Naive thymus-derived CD4-positive, alpha-beta T cell (primary cell): ENCODE measurements at regions of chr5 and their contacts with region 1.

Region 1: GRCh38 chr5:139341650-139342422 is at the start of gene PAIP2:
- DNase-seq: peak; percentile 94 to 98 (median 97)
- ATAC-seq: peak; percentile 95
- H3K4me3 ChIP-seq: peak within 1 kb of the TSS; percentile 96
- H3K4me3 Mint-ChIP-seq: peak within 1 kb of the TSS; percentile 95 to 100 (median 98)
- H3K27ac ChIP-seq: peak within 1 kb of the TSS; percentile 98
- H3K27ac Mint-ChIP-seq: peak within 1 kb of the TSS; percentile 96 to 100 (median 99)
- H3K4me1 ChIP-seq: peaks cover 28 to 30% of the 10 kb centered on the region in 2 donors
- H3K4me1 Mint-ChIP-seq: peaks cover 34 to 65% (median 55%) of the 10 kb centered on the region in 7 donors
- H3K27me3 ChIP-seq: no peaks in the 10 kb centered on the region
- H3K27me3 Mint-ChIP-seq: peaks cover 0 to 5% (median 0%) of the 10 kb centered on the region in 5 donors
- total RNA-seq, gene PAIP2: 88.8 to 121 (median 106) TPM

Region 2: GRCh38 chr5:138824924-138825863 is 516.6 kb before region 1 on chr5:
- CTCF ChIA-PET with region 1: no interaction called
- POLR2A ChIA-PET with region 1: no interaction called
- intact Hi-C with region 1: loop called in 1 of 2 experiments (anchors 1 kb)
- DNase-seq: peak in 4 of 9 donors; percentile 5 to 25 (median 18)
- ATAC-seq: no peak
- H3K4me3 ChIP-seq: no peak overlapping the region
- H3K4me3 Mint-ChIP-seq: no peak overlapping the region
- H3K27ac ChIP-seq: no peak overlapping the region
- H3K27ac Mint-ChIP-seq: no peak overlapping the region
- H3K4me1 ChIP-seq: no peaks in the 10 kb centered on the region
- H3K4me1 Mint-ChIP-seq: peaks cover 0 to 4% (median 0%) of the 10 kb centered on the region in 7 donors
- H3K27me3 ChIP-seq: no peaks in the 10 kb centered on the region
- H3K27me3 Mint-ChIP-seq: peaks cover 6 to 31% (median 18%) of the 10 kb centered on the region in 5 donors

Region 3: GRCh38 chr5:139210585-139210984 is 131.3 kb before region 1 on chr5:
- CTCF ChIA-PET with region 1: no interaction called
- POLR2A ChIA-PET with region 1: no interaction called
- intact Hi-C with region 1: no loop called
- DNase-seq: no peak
- ATAC-seq: no peak
- H3K4me3 ChIP-seq: no peak overlapping the region
- H3K4me3 Mint-ChIP-seq: no peak overlapping the region
- H3K27ac ChIP-seq: no peak overlapping the region
- H3K27ac Mint-ChIP-seq: no peak overlapping the region
- H3K4me1 ChIP-seq: no peaks in the 10 kb centered on the region
- H3K4me1 Mint-ChIP-seq: peaks cover 0 to 11% (median 0%) of the 10 kb centered on the region in 7 donors
- H3K27me3 ChIP-seq: no peaks in the 10 kb centered on the region
- H3K27me3 Mint-ChIP-seq: no peaks in the 10 kb centered on the region

Region 4: DNA sequence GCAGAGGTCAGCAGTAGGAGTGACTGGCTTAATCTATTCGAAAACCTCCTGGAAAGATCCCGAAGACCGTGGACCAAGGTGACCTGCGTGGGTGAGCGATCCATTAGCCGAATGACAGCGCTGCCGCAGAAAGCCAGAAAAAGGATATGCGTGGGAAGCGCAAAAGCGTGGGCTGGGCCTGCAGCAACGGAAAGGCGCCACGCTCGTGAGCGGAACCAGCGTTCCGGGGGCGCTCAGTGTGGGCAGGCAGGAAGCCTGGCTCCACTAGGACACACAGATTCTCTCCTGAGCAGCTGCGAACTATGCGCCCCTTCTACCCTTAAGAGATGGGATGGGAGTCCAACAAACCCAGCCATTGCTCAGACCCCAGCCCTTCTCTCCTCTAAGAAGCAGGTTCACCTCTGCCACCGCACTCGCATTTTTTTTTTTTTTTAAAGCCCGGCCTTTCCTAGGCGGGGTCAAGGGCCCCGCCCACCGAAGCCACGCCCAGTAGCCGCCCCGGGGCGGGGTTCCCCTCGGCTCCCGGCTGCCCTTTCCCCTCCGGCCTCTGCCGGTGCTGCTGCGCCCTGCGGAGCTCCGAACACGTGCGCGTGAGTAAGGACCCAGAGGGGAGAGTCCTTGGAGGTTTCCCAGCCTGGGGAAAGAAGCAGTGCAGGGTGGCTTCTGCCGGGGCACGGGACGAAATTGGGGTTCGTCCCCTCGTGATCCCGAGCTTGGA is 68.1 kb before region 1 on chr5:
- CTCF ChIA-PET with region 1: interaction called, 3 read pairs
- POLR2A ChIA-PET with region 1: interaction called, 13 read pairs
- intact Hi-C with region 1: loop called (anchors 1 to 5 kb)
- DNase-seq: peak; percentile 71 to 95 (median 83)
- ATAC-seq: peak; percentile 99
- H3K4me3 ChIP-seq: peak overlapping the region; percentile 71
- H3K4me3 Mint-ChIP-seq: peak overlapping the region; percentile 77 to 92 (median 90)
- H3K27ac ChIP-seq: peak overlapping the region; percentile 69
- H3K27ac Mint-ChIP-seq: peak overlapping the region; percentile 54 to 92 (median 85)
- H3K4me1 ChIP-seq: peaks cover 26 to 27% of the 10 kb centered on the region in 2 donors
- H3K4me1 Mint-ChIP-seq: peaks cover 30 to 54% (median 47%) of the 10 kb centered on the region in 7 donors
- H3K27me3 ChIP-seq: no peaks in the 10 kb centered on the region
- H3K27me3 Mint-ChIP-seq: peaks cover 0 to 3% (median 0%) of the 10 kb centered on the region in 5 donors

Region 5: GRCh38 chr5:139301808-139302499 is 39.9 kb before region 1 on chr5:
- CTCF ChIA-PET with region 1: no interaction called
- POLR2A ChIA-PET with region 1: interaction called, 16 read pairs
- intact Hi-C with region 1: no loop called
- DNase-seq: no peak
- ATAC-seq: no peak
- H3K4me3 ChIP-seq: no peak overlapping the region
- H3K4me3 Mint-ChIP-seq: peak overlapping the region in 9 of 10 donors; percentile 45 to 93 (median 69)
- H3K27ac ChIP-seq: peak overlapping the region; percentile 20
- H3K27ac Mint-ChIP-seq: peak overlapping the region in 5 of 9 donors; percentile 33 to 88 (median 56)
- H3K4me1 ChIP-seq: peaks cover 75 to 85% of the 10 kb centered on the region in 2 donors
- H3K4me1 Mint-ChIP-seq: peaks cover 64 to 100% (median 97%) of the 10 kb centered on the region in 7 donors
- H3K27me3 ChIP-seq: no peaks in the 10 kb centered on the region
- H3K27me3 Mint-ChIP-seq: no peaks in the 10 kb centered on the region

Region 6: GRCh38 chr5:139403787-139404483 is 62.1 kb after region 1 on chr5 and contains the start of gene SPATA24:
- CTCF ChIA-PET with region 1: interaction called, 5 read pairs
- POLR2A ChIA-PET with region 1: interaction called, 20 read pairs
- intact Hi-C with region 1: loop called (anchors 1 kb)
- DNase-seq: peak; percentile 90 to 99 (median 98)
- ATAC-seq: peak; percentile 94
- H3K4me3 ChIP-seq: peak within 1 kb of the TSS; percentile 56
- H3K4me3 Mint-ChIP-seq: peak within 1 kb of the TSS; percentile 88 to 98 (median 94)
- H3K27ac ChIP-seq: peak within 1 kb of the TSS; percentile 88
- H3K27ac Mint-ChIP-seq: peak within 1 kb of the TSS; percentile 96 to 100 (median 99)
- H3K4me1 ChIP-seq: peaks cover 16 to 18% of the 10 kb centered on the region in 2 donors
- H3K4me1 Mint-ChIP-seq: peaks cover 26 to 42% (median 36%) of the 10 kb centered on the region in 7 donors
- H3K27me3 ChIP-seq: no peaks in the 10 kb centered on the region
- H3K27me3 Mint-ChIP-seq: no peaks in the 10 kb centered on the region
- total RNA-seq, gene SPATA24: 4.4 to 7.6 (median 5.8) TPM

Region 7: DNA sequence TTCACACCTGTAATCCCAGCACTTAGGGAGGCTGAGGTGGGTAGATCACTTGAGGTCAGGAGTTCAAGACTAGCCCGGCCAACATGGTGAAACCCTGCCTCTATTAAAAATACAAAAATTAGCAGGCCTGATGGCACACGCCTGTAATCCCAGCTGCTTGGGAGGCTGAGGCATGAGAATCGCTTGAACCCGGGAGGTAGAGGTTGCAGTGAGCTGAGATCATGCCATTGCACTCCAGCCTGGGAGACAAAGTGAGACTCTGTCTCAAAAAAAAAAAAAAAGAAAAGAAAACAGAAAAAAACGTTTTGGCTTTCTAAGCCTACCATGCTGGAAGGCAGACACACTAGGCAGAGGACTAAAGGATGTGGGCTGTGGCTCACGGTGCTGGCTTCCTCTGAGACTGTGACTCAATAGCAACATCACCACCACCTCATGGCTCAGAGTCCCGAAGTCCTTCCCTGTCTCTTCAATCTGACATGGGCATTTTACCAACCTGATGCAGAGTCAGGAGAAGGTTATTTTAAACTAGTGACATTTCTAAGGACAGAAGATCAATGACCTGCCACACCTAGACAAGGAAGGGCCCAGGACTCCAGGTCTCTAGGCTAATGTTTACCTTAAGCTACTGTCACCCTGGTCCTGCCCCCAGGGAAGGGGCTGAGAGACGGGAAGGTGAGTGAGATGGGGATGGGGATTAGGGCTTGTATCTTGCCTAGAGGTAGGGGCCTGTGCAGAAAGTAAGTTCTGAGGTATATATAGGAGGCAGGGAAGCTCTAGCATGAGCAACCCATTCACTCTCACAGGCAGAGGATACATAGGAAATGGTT is 117.0 kb after region 1 on chr5:
- CTCF ChIA-PET with region 1: no interaction called
- POLR2A ChIA-PET with region 1: no interaction called
- intact Hi-C with region 1: no loop called
- DNase-seq: peak in 8 of 9 donors; percentile 71 to 89 (median 85)
- ATAC-seq: peak; percentile 98
- H3K4me3 ChIP-seq: peak overlapping the region; percentile 10
- H3K4me3 Mint-ChIP-seq: peak overlapping the region; percentile 38 to 86 (median 64)
- H3K27ac ChIP-seq: peak overlapping the region; percentile 73
- H3K27ac Mint-ChIP-seq: peak overlapping the region; percentile 89 to 98 (median 94)
- H3K4me1 ChIP-seq: peaks cover 35 to 49% of the 10 kb centered on the region in 2 donors
- H3K4me1 Mint-ChIP-seq: peaks cover 33 to 72% (median 64%) of the 10 kb centered on the region in 7 donors
- H3K27me3 ChIP-seq: no peaks in the 10 kb centered on the region
- H3K27me3 Mint-ChIP-seq: no peaks in the 10 kb centered on the region